Activated B cell treated with CpG ODN at 0.5 μM for 24 hours (primary cell): ENCODE measurements at regions of chrX and their contacts with region 1.

Region 1: DNA sequence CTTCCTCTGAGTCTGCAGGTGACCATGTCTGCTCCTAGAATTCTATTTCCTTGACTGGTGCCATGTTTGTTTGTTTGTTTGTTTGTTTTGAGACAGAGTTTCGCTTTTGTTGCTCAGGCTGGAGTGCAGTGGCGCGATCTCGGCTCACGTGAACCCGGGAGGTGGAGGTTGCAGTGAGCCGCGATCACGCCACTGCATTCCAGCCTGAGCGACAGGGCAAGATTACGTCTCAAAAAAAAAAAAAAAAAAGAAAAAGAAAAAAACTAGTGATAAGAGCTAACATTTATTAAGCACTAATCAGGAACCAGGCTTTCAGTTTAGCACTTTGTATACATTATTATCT is 7.2 kb downstream of the SAT1 start:
- DNase-seq: no peak
- ATAC-seq: no peak
- H3K4me3 Mint-ChIP-seq: no peak overlapping the region
- H3K27ac Mint-ChIP-seq: no peak overlapping the region
- H3K4me1 Mint-ChIP-seq: peaks cover 7% of the 10 kb centered on the region
- H3K27me3 Mint-ChIP-seq: no peaks in the 10 kb centered on the region
- CTCF ChIP-seq: no peak

Region 2: GRCh38 chrX:23773601-23774175 is 16.4 kb before region 1 on chrX:
- CTCF ChIA-PET with region 1: no interaction called
- POLR2A ChIA-PET with region 1: interaction called, 11 read pairs
- intact Hi-C with region 1: no loop called
- DNase-seq: no peak
- ATAC-seq: peak; percentile 88
- H3K4me3 Mint-ChIP-seq: peak overlapping the region; percentile 75
- H3K27ac Mint-ChIP-seq: peak overlapping the region; percentile 96
- H3K4me1 Mint-ChIP-seq: peaks cover 21% of the 10 kb centered on the region
- H3K27me3 Mint-ChIP-seq: no peaks in the 10 kb centered on the region
- CTCF ChIP-seq: no peak